Activated T-helper 2 cell treated with anti-CD3 and anti-CD28 coated beads, Interferon-gamma antibody, Interleukin-2, Interleukin-4, amounts not matched to agents 10 μg/mL and 5 μg/mL and 100 μg/mL, durations not matched to agents 14 hours and 24 hours and 36 hours (primary cell): ENCODE measurements at regions of chr1 and their contacts with region 1.

Region 1: GRCh38 chr1:184386312-184387068 is at the start of gene C1orf21:
- DNase-seq: peak; percentile 70
- H3K4me3 Mint-ChIP-seq: peak within 1 kb of the TSS; percentile 87
- H3K27ac Mint-ChIP-seq: peak within 1 kb of the TSS; percentile 70
- H3K4me1 Mint-ChIP-seq: peaks cover 22% of the 10 kb centered on the region
- H3K27me3 Mint-ChIP-seq: peaks cover 76% of the 10 kb centered on the region
- total RNA-seq, gene C1orf21: 3.4 and 4.2 TPM in 2 replicates

Region 2: GRCh38 chr1:184051485-184052193 is 334.9 kb before region 1 on chr1 and contains the start of gene TSEN15:
- intact Hi-C with region 1: loop called (anchors 10 kb)
- DNase-seq: peak; percentile 69
- H3K4me3 Mint-ChIP-seq: peak within 1 kb of the TSS; percentile 100
- H3K27ac Mint-ChIP-seq: peak within 1 kb of the TSS; percentile 96
- H3K4me1 Mint-ChIP-seq: peaks cover 30% of the 10 kb centered on the region
- H3K27me3 Mint-ChIP-seq: peaks cover 31% of the 10 kb centered on the region
- total RNA-seq, gene TSEN15: 35.1 TPM in 2 replicates

Region 3: DNA sequence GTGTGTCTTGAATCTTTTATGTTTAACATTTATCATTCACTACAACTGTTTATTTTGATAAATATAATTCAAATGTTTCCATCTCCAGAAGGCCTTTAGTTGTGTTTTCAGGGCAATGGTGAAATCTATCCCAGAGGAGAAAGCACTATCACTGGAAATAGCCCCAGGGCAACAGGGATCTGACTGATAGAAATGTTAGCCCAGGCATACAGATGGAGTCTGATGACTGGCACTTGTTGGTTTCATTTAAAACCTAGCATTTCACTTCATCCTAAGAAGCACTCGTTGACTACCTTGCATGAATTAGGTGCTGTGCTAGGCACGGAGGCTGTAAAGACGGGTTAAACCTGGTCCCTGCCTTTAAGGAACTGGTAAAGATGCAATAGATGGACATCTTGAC is 103.4 kb after region 1 on chr1:
- intact Hi-C with region 1: loop called (anchors 2 kb)
- DNase-seq: no peak
- H3K4me3 Mint-ChIP-seq: no peak overlapping the region
- H3K27ac Mint-ChIP-seq: no peak overlapping the region
- H3K4me1 Mint-ChIP-seq: peaks cover 26% of the 10 kb centered on the region
- H3K27me3 Mint-ChIP-seq: peaks cover 6% of the 10 kb centered on the region

Region 4: DNA sequence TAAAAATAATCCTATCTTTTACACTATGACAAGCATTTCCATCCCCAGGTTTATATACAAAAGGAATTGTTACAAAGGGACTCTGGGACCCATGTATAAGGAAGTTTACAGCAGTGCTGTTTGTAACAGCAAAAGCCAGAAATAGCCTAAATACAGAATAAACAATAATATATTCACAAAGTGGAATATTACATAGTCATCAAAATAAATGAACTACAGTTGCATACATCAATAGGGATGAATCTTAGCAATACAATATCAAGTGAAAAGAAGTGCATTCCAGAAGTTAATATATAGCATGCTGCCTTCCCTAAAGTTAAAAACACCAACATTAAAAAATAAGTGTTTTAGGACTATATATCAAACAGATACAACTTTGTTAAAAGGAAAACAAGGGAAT is 290.9 kb after region 1 on chr1:
- intact Hi-C with region 1: loop called (anchors 5 kb)
- DNase-seq: no peak
- H3K4me3 Mint-ChIP-seq: no peak overlapping the region
- H3K27ac Mint-ChIP-seq: no peak overlapping the region
- H3K4me1 Mint-ChIP-seq: no peaks in the 10 kb centered on the region
- H3K27me3 Mint-ChIP-seq: peaks cover 20% of the 10 kb centered on the region

Region 5: GRCh38 chr1:185044981-185045813 is 658.7 kb after region 1 on chr1 and contains the start of gene RNF2:
- intact Hi-C with region 1: loop called (anchors 5 kb)
- DNase-seq: peak; percentile 67
- H3K4me3 Mint-ChIP-seq: peak within 1 kb of the TSS; percentile 87
- H3K27ac Mint-ChIP-seq: peak within 1 kb of the TSS; percentile 80
- H3K4me1 Mint-ChIP-seq: peaks cover 21% of the 10 kb centered on the region
- H3K27me3 Mint-ChIP-seq: peaks cover 13% of the 10 kb centered on the region
- total RNA-seq, gene RNF2: 25.7 and 30.6 TPM in 2 replicates

Region 6: DNA sequence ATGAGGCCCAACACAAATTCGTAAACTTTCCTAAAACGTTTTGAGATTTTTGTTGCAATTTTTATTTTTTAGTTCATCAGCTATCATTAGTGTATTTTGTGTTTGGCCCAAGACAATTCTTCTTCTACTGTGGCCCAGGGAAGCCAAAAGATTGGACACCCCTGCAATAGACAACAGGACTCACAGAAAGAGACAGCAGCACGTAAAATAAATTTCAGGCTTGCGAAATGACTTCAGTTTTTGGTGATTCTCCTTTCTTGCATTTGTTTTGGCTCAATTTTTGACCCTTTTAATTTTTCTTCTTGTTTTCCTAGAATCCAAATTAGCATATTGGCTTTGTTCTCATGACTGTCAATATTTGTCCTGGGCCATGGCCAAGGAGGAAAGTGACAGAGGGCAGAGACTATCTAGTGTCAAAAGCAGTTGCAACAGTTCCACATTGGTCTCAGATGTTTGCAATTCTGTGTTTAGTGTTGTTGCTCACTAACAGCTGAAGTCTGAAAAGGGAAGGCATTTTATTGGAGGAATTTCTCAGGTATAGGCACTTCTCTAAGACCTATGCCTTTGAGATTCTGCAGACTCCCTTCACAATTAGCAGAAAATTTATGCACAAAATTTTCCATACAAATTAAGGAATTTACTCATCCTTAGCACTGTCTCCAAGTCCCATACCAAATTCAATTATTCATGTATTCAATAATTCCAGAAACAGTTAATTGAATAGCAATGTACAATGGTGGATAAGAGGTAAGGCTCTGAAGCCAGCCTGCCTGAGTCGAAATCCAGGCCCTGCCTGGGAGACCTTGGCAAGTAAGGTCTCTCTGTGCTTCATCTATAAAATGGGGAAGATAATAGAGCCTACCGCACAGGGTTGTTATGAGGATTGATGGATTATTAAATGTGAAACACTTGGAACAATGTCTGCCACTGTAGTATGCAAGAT is 1091.4 kb after region 1 on chr1:
- intact Hi-C with region 1: no loop called
- DNase-seq: no peak
- H3K4me3 Mint-ChIP-seq: no peak overlapping the region
- H3K27ac Mint-ChIP-seq: no peak overlapping the region
- H3K4me1 Mint-ChIP-seq: peaks cover 8% of the 10 kb centered on the region
- H3K27me3 Mint-ChIP-seq: no peaks in the 10 kb centered on the region